ENCODE measurements at regions of chr1 and their contacts with region 1.

Region 1: GRCh38 chr1:155989242-155990004 is 11.1 kb upstream of the ARHGEF2 start:
- DNase-seq: peak; percentile 64 to 86 (median 70)
- H3K4me3 ChIP-seq: no peak overlapping the region
- H3K4me3 Mint-ChIP-seq: no peak overlapping the region
- H3K27ac ChIP-seq: no peak overlapping the region
- H3K27ac Mint-ChIP-seq: peak overlapping the region in 2 of 8 donors; percentile 56 to 71
- H3K4me1 ChIP-seq: peaks cover 11% of the 10 kb centered on the region
- H3K4me1 Mint-ChIP-seq: peaks cover 10 to 14% (median 10%) of the 10 kb centered on the region in 3 donors
- H3K27me3 ChIP-seq: no peaks in the 10 kb centered on the region
- H3K27me3 Mint-ChIP-seq: no peaks in the 10 kb centered on the region

Region 2: DNA sequence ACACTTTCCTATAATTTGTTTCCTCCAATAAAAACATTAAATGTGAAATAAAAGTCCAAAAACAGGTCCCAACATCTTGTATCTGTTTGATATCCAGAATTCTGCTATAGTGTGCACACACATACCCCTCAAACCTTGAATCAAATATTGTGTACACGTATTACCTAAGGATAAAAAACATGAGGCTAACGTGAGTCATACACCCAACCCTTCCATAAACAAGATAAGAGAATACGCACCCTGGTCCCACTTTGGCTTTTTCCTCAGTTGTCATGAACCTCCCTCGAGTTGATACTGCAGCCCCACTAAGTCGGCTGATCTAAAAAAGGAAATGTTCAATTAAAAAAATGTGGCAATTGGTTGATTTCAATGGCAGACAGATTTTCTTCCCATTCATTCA is 60.4 kb before region 1 on chr1:
- CTCF ChIA-PET with region 1: interaction called, 19 read pairs
- POLR2A ChIA-PET with region 1: interaction called, 8 read pairs
- DNase-seq: no peak
- H3K4me3 ChIP-seq: no peak overlapping the region
- H3K4me3 Mint-ChIP-seq: peak overlapping the region in 1 of 7 donors; percentile 26
- H3K27ac ChIP-seq: no peak overlapping the region
- H3K27ac Mint-ChIP-seq: peak overlapping the region in 5 of 8 donors; percentile 2 to 62 (median 43)
- H3K4me1 ChIP-seq: peaks cover 37% of the 10 kb centered on the region
- H3K4me1 Mint-ChIP-seq: peaks cover 12 to 34% (median 20%) of the 10 kb centered on the region in 3 donors
- H3K27me3 ChIP-seq: no peaks in the 10 kb centered on the region
- H3K27me3 Mint-ChIP-seq: no peaks in the 10 kb centered on the region

Region 3: DNA sequence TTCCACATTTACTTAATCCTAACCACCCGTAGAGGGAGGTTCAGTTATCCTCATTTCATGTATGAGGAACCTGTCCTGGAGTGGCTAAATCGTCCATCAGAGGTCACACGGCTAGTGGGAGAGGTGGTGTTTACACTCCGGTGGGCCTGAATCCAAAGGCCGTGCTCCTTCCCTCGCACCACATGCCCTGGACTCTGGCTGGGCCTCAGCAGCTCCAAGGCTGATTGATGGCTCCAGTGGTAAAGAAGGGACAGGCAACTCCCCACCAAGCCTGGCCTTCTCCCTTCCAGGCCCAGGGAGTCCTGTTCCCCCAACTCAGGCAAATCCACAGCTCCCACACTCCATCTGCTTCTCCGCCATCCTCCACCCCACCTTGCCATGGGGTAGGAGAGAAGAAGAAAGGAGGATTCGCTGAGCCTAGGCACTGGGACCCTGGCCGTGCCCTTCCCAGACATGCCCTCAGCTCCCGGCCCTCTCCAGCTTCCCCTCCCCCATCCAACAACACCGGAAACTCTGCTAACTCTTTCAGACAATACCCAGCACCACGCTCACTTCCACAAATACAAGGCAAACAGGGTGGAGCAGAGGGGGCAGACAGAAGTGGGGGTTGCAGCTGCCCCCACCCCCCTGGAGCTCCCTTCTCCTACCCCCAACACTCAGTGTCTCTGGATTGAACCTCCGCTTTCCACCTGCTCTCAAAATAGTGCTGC is 21.9 kb before region 1 on chr1:
- CTCF ChIA-PET with region 1: interaction called, 12 read pairs
- POLR2A ChIA-PET with region 1: interaction called, 3 read pairs
- DNase-seq: peak in 1 of 5 donors; percentile 59
- H3K4me3 ChIP-seq: peak overlapping the region; percentile 15
- H3K4me3 Mint-ChIP-seq: peak overlapping the region; percentile 45 to 69 (median 64)
- H3K27ac ChIP-seq: no peak overlapping the region
- H3K27ac Mint-ChIP-seq: peak overlapping the region; percentile 78 to 95 (median 91)
- H3K4me1 ChIP-seq: peaks cover 69% of the 10 kb centered on the region
- H3K4me1 Mint-ChIP-seq: peaks cover 65 to 73% (median 66%) of the 10 kb centered on the region in 3 donors
- H3K27me3 ChIP-seq: no peaks in the 10 kb centered on the region
- H3K27me3 Mint-ChIP-seq: no peaks in the 10 kb centered on the region

Region 4: DNA sequence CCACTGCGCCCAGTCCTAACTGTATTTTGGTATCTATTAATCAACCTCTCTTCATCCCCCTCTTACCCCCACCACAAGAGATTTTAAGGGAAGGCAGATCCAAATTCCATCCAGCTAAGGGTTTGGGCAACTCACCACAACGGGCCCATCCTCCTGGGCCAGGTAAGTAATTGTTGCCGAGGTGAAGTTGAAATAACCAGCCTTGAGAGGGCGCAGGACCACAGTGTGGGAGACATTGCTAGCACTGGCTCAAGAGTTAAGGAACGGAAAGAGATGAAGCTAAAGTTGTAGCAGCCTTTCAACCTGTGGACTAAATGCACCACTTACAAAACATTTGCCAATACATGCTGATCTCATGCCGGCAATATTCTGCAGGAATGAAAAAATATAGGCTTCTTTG is 25.4 kb after region 1 on chr1:
- CTCF ChIA-PET with region 1: no interaction called
- POLR2A ChIA-PET with region 1: no interaction called
- DNase-seq: no peak
- H3K4me3 ChIP-seq: no peak overlapping the region
- H3K4me3 Mint-ChIP-seq: no peak overlapping the region
- H3K27ac ChIP-seq: no peak overlapping the region
- H3K27ac Mint-ChIP-seq: peak overlapping the region in 2 of 8 donors; percentile 38 to 66
- H3K4me1 ChIP-seq: peaks cover 9% of the 10 kb centered on the region
- H3K4me1 Mint-ChIP-seq: peaks cover 26 to 40% (median 27%) of the 10 kb centered on the region in 3 donors
- H3K27me3 ChIP-seq: no peaks in the 10 kb centered on the region
- H3K27me3 Mint-ChIP-seq: no peaks in the 10 kb centered on the region

Region 5: DNA sequence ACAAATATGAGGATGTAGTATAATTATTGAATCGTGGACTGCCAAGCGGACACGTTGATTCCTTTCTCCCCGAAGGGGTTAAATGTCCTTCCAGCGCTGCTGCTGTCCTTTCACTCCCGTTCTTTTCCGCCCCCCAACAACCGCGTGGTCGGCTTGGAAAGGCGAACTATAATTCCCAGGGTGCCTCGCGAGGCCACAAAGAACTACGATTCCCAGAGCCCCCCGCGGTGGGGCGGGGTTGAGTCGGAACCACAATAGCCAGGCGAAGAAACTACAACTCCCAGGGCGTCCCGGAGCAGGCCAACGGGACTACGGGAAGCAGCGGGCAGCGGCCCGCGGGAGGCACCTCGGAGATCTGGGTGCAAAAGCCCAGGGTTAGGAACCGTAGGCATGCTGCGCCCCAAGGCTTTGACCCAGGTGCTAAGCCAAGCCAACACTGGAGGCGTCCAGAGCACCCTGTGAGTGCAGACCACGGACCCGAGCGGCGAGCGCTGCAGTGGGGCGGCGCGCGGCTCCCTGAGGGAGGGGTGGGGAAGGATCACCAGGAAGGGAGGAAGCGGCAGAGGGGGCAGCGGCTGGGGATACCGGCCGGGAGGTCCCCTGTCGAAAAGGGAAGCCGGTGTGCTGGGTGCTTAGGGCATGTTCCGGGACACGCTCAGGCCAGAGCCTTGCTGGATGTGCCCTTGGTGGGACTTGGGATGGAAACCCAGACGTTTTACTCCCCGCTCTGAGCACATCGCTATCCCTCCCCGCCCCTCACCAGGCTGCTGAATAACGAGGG is 65.3 kb after region 1 on chr1 and contains the start of gene LAMTOR2:
- CTCF ChIA-PET with region 1: no interaction called
- POLR2A ChIA-PET with region 1: no interaction called
- DNase-seq: peak; percentile 89 to 95 (median 93)
- H3K4me3 ChIP-seq: peak within 1 kb of the TSS; percentile 96
- H3K4me3 Mint-ChIP-seq: peak within 1 kb of the TSS; percentile 90 to 99 (median 96)
- H3K27ac ChIP-seq: peak within 1 kb of the TSS; percentile 79
- H3K27ac Mint-ChIP-seq: peak within 1 kb of the TSS; percentile 84 to 98 (median 95)
- H3K4me1 ChIP-seq: peaks cover 16% of the 10 kb centered on the region
- H3K4me1 Mint-ChIP-seq: peaks cover 29 to 49% (median 35%) of the 10 kb centered on the region in 3 donors
- H3K27me3 ChIP-seq: no peaks in the 10 kb centered on the region
- H3K27me3 Mint-ChIP-seq: no peaks in the 10 kb centered on the region
- total RNA-seq, gene LAMTOR2: 61.9 to 67.4 TPM